Sciatic nerve (tissue), 2 donors: ENCODE measurements at regions of chr19 and their contacts with region 1.

Region 1: DNA sequence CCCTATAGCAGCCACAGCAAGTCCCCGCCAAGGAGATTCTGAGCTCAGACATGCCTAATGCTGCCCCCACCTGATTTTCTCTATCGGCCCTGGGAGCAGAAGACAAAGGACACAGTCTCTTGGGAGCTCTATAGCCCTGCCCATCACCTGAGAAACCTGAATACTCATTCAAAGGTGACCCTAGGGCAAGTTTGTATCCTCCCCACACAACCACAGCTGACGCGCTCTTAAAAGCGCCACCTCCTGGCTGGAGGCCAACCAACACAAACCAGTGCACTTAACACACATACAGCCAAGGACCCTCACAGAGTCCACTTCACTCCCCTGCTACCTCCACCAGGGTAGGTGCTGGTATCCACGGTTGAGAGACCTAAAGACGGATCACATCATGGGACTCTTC is 8.8 kb upstream of the IGFL4 start:
- DNase-seq: no peak
- ATAC-seq: no peak

Region 2: GRCh38 chr19:45952686-45953505 is 96.7 kb before region 1 on chr19:
- intact Hi-C with region 1: no loop called
- DNase-seq: no peak
- ATAC-seq: peak; percentile 70

Region 3: DNA sequence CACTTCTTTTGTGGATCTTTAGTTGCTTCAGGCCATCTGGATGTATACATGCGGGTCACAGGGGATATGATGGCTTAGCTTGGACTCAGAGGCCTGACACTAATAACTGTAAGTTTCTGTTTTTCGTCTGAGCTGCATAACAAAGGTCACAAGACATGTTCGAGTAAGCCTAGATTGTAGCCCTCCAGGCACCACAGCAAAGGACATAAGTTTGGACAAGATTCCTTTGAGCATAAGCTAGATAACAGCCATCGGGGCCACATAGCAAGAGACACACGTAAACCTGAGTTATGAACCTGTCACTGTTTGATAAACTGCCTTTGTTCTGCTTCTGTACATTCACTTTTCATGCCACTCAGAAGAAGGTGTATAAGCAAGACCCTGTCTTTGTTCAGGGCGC is 60.3 kb after region 1 on chr19:
- intact Hi-C with region 1: loop called (anchors 2 kb)
- DNase-seq: no peak
- ATAC-seq: no peak